ENCODE measurements at regions of chr9 and their contacts with region 1.

Region 1: GRCh38 chr9:137077010-137077747 is at the start of gene UAP1L1:
- DNase-seq: peak; percentile 43
- H3K4me3 ChIP-seq: peak within 1 kb of the TSS; percentile 54 to 88 (median 60)
- H3K27ac ChIP-seq: no peak within 1 kb of the TSS
- H3K4me1 ChIP-seq: peaks cover 5% of the 10 kb centered on the region
- H3K27me3 ChIP-seq: no peaks in the 10 kb centered on the region
- CTCF ChIP-seq: no peak
- POLR2A ChIP-seq: peak; percentile 71
- total RNA-seq, gene UAP1L1: 38.1 and 41.7 TPM in 2 replicates

Region 2: DNA sequence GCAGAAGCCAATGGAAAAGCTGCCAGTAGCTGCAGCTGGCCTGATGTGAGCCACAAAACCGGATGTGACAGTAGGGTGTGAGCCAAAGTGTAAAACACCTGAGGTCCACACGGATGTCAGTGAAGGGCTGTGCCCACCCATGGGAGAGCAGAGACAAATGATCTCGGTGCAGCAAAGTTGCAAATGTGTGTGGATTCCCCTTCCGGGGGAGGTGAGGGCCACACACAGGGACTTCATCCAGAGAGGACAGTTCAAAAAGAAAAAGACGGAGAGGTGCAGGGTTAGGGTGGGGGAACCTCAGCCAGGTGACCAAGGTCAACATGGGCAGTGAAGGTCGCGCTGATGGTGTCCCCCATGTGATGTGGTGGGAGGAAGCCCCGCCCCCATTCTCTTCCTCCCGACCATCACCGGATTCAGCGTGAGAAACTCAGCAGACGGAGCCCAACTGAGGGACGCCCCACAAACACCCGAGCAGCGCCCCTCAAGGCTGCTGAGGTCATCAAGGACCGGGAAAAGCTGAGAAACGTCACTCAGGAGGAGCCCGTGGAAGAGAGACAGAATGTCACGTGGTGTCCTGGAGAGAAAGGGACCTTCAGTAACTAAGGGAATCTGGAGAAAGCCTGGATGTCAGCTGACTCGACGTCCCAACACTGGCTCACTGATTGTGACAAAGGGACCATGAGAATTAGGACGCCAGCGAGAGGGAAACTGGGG is 111.3 kb before region 1 on chr9:
- CTCF ChIA-PET with region 1: no interaction called
- POLR2A ChIA-PET with region 1: no interaction called
- dilution Hi-C with region 1: no loop called
- intact Hi-C with region 1: no loop called
- DNase-seq: no peak
- H3K4me3 ChIP-seq: no peak overlapping the region
- H3K27ac ChIP-seq: no peak overlapping the region
- H3K4me1 ChIP-seq: no peaks in the 10 kb centered on the region
- H3K27me3 ChIP-seq: no peaks in the 10 kb centered on the region
- CTCF ChIP-seq: no peak
- POLR2A ChIP-seq: no peak

Region 3: GRCh38 chr9:137064027-137064879 is 12.9 kb before region 1 on chr9:
- CTCF ChIA-PET with region 1: interaction called, 29 read pairs
- POLR2A ChIA-PET with region 1: no interaction called
- dilution Hi-C with region 1: no loop called
- intact Hi-C with region 1: no loop called
- DNase-seq: peak; percentile 31
- H3K4me3 ChIP-seq: no peak overlapping the region
- H3K27ac ChIP-seq: no peak overlapping the region
- H3K4me1 ChIP-seq: peaks cover under 1% of the 10 kb centered on the region
- H3K27me3 ChIP-seq: no peaks in the 10 kb centered on the region
- CTCF ChIP-seq: peak; percentile 86 to 97
- POLR2A ChIP-seq: no peak